ENCODE measurements at regions of chr15 and their contacts with region 1.

Region 1: DNA sequence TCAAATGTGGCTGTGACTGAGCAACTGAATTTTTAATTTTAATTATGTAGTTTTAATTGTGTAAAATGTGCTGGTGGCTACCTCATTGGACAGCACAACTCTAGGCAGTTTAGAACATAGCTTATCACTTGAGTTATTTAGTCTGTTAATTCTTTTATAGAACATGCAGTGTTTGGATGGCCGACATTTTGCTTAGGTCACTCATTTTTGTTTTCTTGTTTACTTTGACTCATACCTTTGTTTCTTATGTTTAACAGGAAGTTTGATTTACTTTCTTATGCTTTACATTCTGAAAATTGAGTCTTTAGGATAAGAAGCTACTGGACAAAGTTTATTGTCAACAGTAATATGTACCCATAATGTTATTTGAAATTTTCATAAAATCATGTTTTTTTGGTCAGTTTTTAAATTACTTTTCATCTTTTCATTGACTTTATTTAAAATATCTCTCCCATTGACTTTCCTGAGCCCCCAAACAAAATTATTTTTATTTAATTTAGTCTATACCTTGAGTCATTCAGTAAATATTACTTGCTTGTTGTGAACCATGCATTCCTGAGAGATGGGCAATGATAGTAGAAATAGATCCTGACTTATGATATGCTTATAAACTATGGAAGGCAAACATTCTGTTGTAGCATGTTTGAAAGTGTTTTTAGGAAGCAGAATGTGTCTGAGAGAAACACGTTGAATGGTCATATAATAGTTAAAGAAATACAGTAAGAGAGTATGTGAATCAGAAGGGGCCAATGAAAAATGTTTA is 60.6 kb downstream of the TCF12 start:
- DNase-seq: no peak
- ATAC-seq: no peak
- H3K4me3 ChIP-seq: no peak overlapping the region
- H3K4me3 Mint-ChIP-seq: no peak overlapping the region
- H3K27ac ChIP-seq: no peak overlapping the region
- H3K27ac Mint-ChIP-seq: no peak overlapping the region
- H3K4me1 ChIP-seq: peaks cover 15% of the 10 kb centered on the region
- H3K4me1 Mint-ChIP-seq: peaks cover 49% of the 10 kb centered on the region
- H3K27me3 ChIP-seq: no peaks in the 10 kb centered on the region
- H3K27me3 Mint-ChIP-seq: no peaks in the 10 kb centered on the region
- CTCF ChIP-seq: no peak

Region 2: GRCh38 chr15:56929399-56929798 is 49.7 kb before region 1 on chr15:
- CTCF ChIA-PET with region 1: interaction called, 3 read pairs
- POLR2A ChIA-PET with region 1: no interaction called
- intact Hi-C with region 1: loop called in 1 of 2 experiments (anchors 5 kb)
- DNase-seq: no peak
- ATAC-seq: no peak
- H3K4me3 ChIP-seq: no peak overlapping the region
- H3K4me3 Mint-ChIP-seq: no peak overlapping the region
- H3K27ac ChIP-seq: no peak overlapping the region
- H3K27ac Mint-ChIP-seq: peak overlapping the region; percentile 16
- H3K4me1 ChIP-seq: peaks cover 23% of the 10 kb centered on the region
- H3K4me1 Mint-ChIP-seq: peaks cover 76% of the 10 kb centered on the region
- H3K27me3 ChIP-seq: no peaks in the 10 kb centered on the region
- H3K27me3 Mint-ChIP-seq: no peaks in the 10 kb centered on the region
- CTCF ChIP-seq: no peak

Region 3: GRCh38 chr15:56963710-56964109 is 15.4 kb before region 1 on chr15:
- CTCF ChIA-PET with region 1: no interaction called
- POLR2A ChIA-PET with region 1: no interaction called
- intact Hi-C with region 1: loop called in 1 of 2 experiments (anchors 2 kb)
- DNase-seq: peak in 2 of 9 experiments; percentile 11 to 57
- ATAC-seq: no peak
- H3K4me3 ChIP-seq: no peak overlapping the region
- H3K4me3 Mint-ChIP-seq: peak overlapping the region; percentile 58
- H3K27ac ChIP-seq: no peak overlapping the region
- H3K27ac Mint-ChIP-seq: peak overlapping the region; percentile 24
- H3K4me1 ChIP-seq: peaks cover 27% of the 10 kb centered on the region
- H3K4me1 Mint-ChIP-seq: peaks cover 60% of the 10 kb centered on the region
- H3K27me3 ChIP-seq: no peaks in the 10 kb centered on the region
- H3K27me3 Mint-ChIP-seq: no peaks in the 10 kb centered on the region
- CTCF ChIP-seq: no peak